Activated CD4-positive, alpha-beta memory T cell treated with anti-CD3 and anti-CD28 coated beads for 36 hours (primary cell): ENCODE measurements at regions of chr17 and their contacts with region 1.

Region 1: GRCh38 chr17:64938925-64939474 is 19.7 kb upstream of the LRRC37A3 start:
- DNase-seq: peak; percentile 65
- H3K4me3 Mint-ChIP-seq: no peak overlapping the region
- H3K27ac Mint-ChIP-seq: no peak overlapping the region
- H3K4me1 Mint-ChIP-seq: peaks cover 8% of the 10 kb centered on the region
- H3K27me3 Mint-ChIP-seq: no peaks in the 10 kb centered on the region

Region 2: GRCh38 chr17:64778240-64779097 is 160.5 kb before region 1 on chr17:
- CTCF ChIA-PET with region 1: interaction called, 10 read pairs
- POLR2A ChIA-PET with region 1: no interaction called
- intact Hi-C with region 1: no loop called
- DNase-seq: no peak
- H3K4me3 Mint-ChIP-seq: peak overlapping the region; percentile 5
- H3K27ac Mint-ChIP-seq: no peak overlapping the region
- H3K4me1 Mint-ChIP-seq: peaks cover 26% of the 10 kb centered on the region
- H3K27me3 Mint-ChIP-seq: peaks cover 6% of the 10 kb centered on the region

Region 3: GRCh38 chr17:64975329-64976087 is 36.5 kb after region 1 on chr17:
- CTCF ChIA-PET with region 1: no interaction called
- POLR2A ChIA-PET with region 1: no interaction called
- intact Hi-C with region 1: no loop called
- DNase-seq: peak; percentile 97
- H3K4me3 Mint-ChIP-seq: peak overlapping the region; percentile 82
- H3K27ac Mint-ChIP-seq: peak overlapping the region; percentile 100
- H3K4me1 Mint-ChIP-seq: peaks cover 55% of the 10 kb centered on the region
- H3K27me3 Mint-ChIP-seq: no peaks in the 10 kb centered on the region